Heart left ventricle (tissue), 16 donors: ENCODE measurements at regions of chr11 and their contacts with region 1.

Region 1: GRCh38 chr11:105862736-105863367 is 159.2 kb downstream of the MSANTD4 start:
- DNase-seq: no peak
- ATAC-seq: peak in 1 of 4 donors; percentile 41
- H3K4me3 ChIP-seq: no peak overlapping the region
- H3K27ac ChIP-seq: no peak overlapping the region
- H3K4me1 ChIP-seq: no peaks in the 10 kb centered on the region
- H3K27me3 ChIP-seq: peaks cover 0 to 10% (median 0%) of the 10 kb centered on the region in 9 donors
- CTCF ChIP-seq: peak; percentile 40 to 72 (median 56)
- POLR2A ChIP-seq: no peak

Region 2: GRCh38 chr11:104151404-104152204 is 1711.2 kb before region 1 on chr11:
- intact Hi-C with region 1: loop called in 1 of 10 experiments (anchors 10 kb)
- DNase-seq: no peak
- ATAC-seq: no peak
- H3K4me3 ChIP-seq: no peak overlapping the region
- H3K27ac ChIP-seq: no peak overlapping the region
- H3K4me1 ChIP-seq: peaks cover 0 to 7% (median 0%) of the 10 kb centered on the region in 12 donors
- H3K27me3 ChIP-seq: no peaks in the 10 kb centered on the region
- CTCF ChIP-seq: peak; percentile 17 to 56 (median 42)
- POLR2A ChIP-seq: no peak

Region 3: GRCh38 chr11:104164028-104164520 is 1698.8 kb before region 1 on chr11 and contains the start of gene PDGFD:
- intact Hi-C with region 1: loop called in 2 of 10 experiments (anchors 10 kb)
- DNase-seq: peak; percentile 72 to 81 (median 73)
- ATAC-seq: peak; percentile 81 to 97 (median 93)
- H3K4me3 ChIP-seq: peak within 1 kb of the TSS; percentile 36 to 80 (median 65)
- H3K27ac ChIP-seq: peak within 1 kb of the TSS in 11 of 12 donors; percentile 39 to 74 (median 65)
- H3K4me1 ChIP-seq: peaks cover 0 to 22% (median 2%) of the 10 kb centered on the region in 12 donors
- H3K27me3 ChIP-seq: no peaks in the 10 kb centered on the region
- CTCF ChIP-seq: peak; percentile 26 to 71 (median 48)
- POLR2A ChIP-seq: no peak
- total RNA-seq, gene PDGFD: 8.0 to 24.6 (median 17.3) TPM

Region 4: GRCh38 chr11:104254347-104254746 is 1608.5 kb before region 1 on chr11:
- intact Hi-C with region 1: loop called in 2 of 10 experiments (anchors 10 kb)
- DNase-seq: peak in 4 of 5 donors; percentile 18 to 37 (median 24)
- ATAC-seq: peak in 2 of 4 donors; percentile 62 to 76
- H3K4me3 ChIP-seq: no peak overlapping the region
- H3K27ac ChIP-seq: no peak overlapping the region
- H3K4me1 ChIP-seq: peaks cover 0 to 7% (median 0%) of the 10 kb centered on the region in 12 donors
- H3K27me3 ChIP-seq: no peaks in the 10 kb centered on the region
- CTCF ChIP-seq: peak; percentile 27 to 56 (median 44)
- POLR2A ChIP-seq: no peak

Region 5: DNA sequence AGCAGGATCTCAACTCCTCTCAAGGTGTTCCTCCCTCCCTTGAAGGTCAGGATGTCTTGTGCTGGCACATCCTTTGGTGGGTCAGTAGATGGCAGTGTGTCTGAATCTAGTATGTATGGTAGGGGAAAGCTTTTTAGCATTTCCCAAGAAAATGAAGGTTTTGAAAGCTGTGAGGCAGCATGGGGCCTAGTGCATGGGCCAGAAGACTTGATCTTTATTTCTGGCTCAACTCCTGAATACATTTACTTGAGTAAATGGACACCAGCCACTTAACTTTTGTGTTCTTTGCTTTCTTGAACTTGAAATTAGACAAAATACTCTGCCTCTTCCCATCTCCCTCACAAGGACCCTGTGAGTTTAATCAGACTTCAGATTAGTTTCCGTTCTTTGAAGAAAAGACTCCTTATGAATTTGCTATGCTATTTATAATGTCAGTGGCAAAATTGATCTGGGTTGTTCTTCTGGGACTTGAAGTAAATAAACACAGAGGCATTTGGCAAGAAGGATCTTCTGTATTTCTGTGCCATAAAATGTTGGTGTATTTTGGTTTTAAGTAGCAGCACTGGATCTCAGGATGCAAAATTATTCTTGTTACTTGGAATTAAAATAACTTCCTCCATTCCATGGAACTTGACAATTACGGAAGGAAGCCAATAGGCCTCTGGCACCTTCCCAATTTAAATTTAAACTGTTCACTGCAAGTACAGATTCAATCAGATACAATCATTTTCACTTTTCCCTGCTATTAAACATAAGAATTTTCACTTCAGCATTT is 1253.4 kb before region 1 on chr11:
- intact Hi-C with region 1: loop called in 2 of 10 experiments (anchors 10 kb)
- DNase-seq: peak in 2 of 5 donors; percentile 18 to 23
- ATAC-seq: peak in 3 of 4 donors; percentile 77 to 84 (median 81)
- H3K4me3 ChIP-seq: no peak overlapping the region
- H3K27ac ChIP-seq: peak overlapping the region in 7 of 12 donors; percentile 10 to 78 (median 42)
- H3K4me1 ChIP-seq: peaks cover 0 to 18% (median 14%) of the 10 kb centered on the region in 12 donors
- H3K27me3 ChIP-seq: no peaks in the 10 kb centered on the region
- CTCF ChIP-seq: peak; percentile 23 to 76 (median 58)
- POLR2A ChIP-seq: no peak